ENCODE measurements at regions of chr19 and their contacts with region 1.

Region 1: DNA sequence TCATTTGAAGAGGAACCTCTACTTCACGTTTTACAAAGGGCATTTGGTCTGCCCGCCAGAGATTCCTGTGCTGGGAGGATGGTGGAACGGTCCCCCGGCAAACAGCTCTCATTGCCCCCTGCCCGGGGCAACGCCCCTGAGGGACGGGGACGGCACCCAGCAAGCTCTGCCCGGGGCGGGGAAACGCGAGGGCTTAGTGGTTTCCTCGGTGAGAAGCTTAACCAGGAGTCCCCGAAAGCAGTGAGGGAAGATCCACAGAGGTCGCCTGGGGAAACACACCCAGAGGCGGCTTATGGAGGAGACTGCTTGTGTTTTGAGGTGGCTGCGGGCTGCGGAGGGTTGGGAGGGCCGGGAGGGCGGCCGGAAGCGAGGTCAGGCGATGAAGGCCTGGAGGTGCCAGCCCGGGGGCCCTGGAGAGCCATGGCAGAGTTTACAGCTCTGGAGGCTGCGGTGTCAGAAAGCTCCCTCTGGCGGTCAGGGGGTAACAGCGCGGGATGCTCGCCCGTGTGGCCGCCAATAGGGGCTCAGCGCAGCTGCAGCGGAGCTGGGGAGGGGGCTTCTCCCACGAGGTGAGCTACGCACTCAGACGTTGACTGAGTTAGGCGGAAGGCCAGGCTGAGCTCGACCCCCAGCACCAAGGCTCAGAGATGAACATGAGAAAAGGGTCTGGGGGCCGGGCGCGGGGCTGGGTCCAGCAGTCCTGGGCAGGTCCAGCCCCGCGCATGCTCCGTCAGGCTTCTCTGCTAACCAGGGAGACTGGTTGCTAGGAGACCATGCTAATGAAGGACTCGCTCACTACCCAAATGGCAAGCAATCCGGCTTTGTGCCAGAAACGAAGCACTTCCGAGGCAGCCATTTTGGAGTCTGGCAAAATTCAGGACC is 652 bp upstream of the TPGS1 start:
- DNase-seq: peak; percentile 97
- ATAC-seq: peak; percentile 66
- H3K4me3 Mint-ChIP-seq: peak overlapping the region; percentile 91
- H3K27ac Mint-ChIP-seq: peak overlapping the region; percentile 99
- H3K4me1 Mint-ChIP-seq: peaks cover 35% of the 10 kb centered on the region
- H3K27me3 Mint-ChIP-seq: no peaks in the 10 kb centered on the region
- CTCF ChIP-seq: peak; percentile 96

Region 2: GRCh38 chr19:495402-496186 is 11.1 kb before region 1 on chr19:
- CTCF ChIA-PET with region 1: interaction called, 22 read pairs
- POLR2A ChIA-PET with region 1: interaction called, 10 read pairs
- intact Hi-C with region 1: no loop called
- DNase-seq: peak; percentile 67
- ATAC-seq: peak; percentile 69
- H3K4me3 Mint-ChIP-seq: no peak overlapping the region
- H3K27ac Mint-ChIP-seq: no peak overlapping the region
- H3K4me1 Mint-ChIP-seq: peaks cover 2% of the 10 kb centered on the region
- H3K27me3 Mint-ChIP-seq: peaks cover 18% of the 10 kb centered on the region
- CTCF ChIP-seq: peak; percentile 93

Region 3: GRCh38 chr19:518603-519231 is 12.1 kb after region 1 on chr19:
- CTCF ChIA-PET with region 1: interaction called, 24 read pairs
- POLR2A ChIA-PET with region 1: interaction called, 20 read pairs
- intact Hi-C with region 1: no loop called
- DNase-seq: peak; percentile 72
- ATAC-seq: peak; percentile 92
- H3K4me3 Mint-ChIP-seq: no peak overlapping the region
- H3K27ac Mint-ChIP-seq: no peak overlapping the region
- H3K4me1 Mint-ChIP-seq: peaks cover 5% of the 10 kb centered on the region
- H3K27me3 Mint-ChIP-seq: no peaks in the 10 kb centered on the region
- CTCF ChIP-seq: peak; percentile 23